RWPE1 (cell line): ENCODE measurements at regions of chr16 and their contacts with region 1.

Region 1: GRCh38 chr16:81873843-81874752 is 95.0 kb downstream of the PLCG2 start:
- DNase-seq: peak; percentile 73
- H3K27ac ChIP-seq: no peak overlapping the region
- CTCF ChIP-seq: peak; percentile 77

Region 2: GRCh38 chr16:81827431-81827830 is 46.7 kb before region 1 on chr16:
- CTCF ChIA-PET with region 1: no interaction called
- POLR2A ChIA-PET with region 1: no interaction called
- DNase-seq: no peak
- H3K27ac ChIP-seq: no peak overlapping the region
- CTCF ChIP-seq: no peak

Region 3: GRCh38 chr16:81861503-81861902 is 12.6 kb before region 1 on chr16:
- CTCF ChIA-PET with region 1: interaction called, 11 read pairs
- POLR2A ChIA-PET with region 1: no interaction called
- DNase-seq: peak; percentile 26
- H3K27ac ChIP-seq: no peak overlapping the region
- CTCF ChIP-seq: no peak

Region 4: DNA sequence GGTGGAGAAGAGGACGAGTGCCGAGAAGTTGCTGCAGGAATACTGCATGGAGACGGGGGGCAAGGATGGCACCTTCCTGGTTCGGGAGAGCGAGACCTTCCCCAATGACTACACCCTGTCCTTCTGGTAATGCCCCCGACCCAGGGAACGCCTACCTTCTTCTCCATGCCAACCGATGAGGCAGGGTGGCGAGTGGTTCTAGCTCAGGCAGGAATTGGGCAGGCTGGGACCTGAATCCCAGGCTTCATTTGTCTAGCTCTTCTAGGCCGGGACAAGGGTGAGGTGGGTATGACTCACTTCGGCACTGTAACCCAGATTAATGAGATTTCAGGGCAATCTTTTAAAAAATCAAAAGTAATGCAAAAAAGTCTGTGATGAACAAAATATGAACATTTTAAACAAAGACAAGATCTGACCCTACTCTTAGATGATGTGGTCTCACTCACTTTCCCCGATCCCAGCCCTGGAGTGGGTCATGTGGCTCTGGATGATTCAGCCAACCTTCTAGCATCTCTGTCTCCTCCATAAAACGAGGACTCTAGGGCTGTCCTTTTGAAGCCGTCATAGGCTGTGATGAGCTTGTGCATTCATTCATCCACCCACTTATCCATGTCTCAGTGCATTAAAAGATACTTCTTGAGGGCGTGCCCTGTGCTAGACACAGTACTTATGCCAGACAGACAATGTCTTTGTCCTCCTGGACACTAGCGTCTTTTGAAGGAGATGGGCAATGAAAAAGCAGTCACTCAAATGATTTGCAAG is 34.5 kb after region 1 on chr16:
- CTCF ChIA-PET with region 1: no interaction called
- POLR2A ChIA-PET with region 1: no interaction called
- DNase-seq: peak; percentile 79
- H3K27ac ChIP-seq: peak overlapping the region; percentile 70
- CTCF ChIP-seq: no peak